ENCODE measurements at regions of chr16 and their contacts with region 1.

Region 1: GRCh38 chr16:72093448-72094265 is at the starts of genes DHX38 and TXNL4B:
- DNase-seq: peak; percentile 87 to 97
- ATAC-seq: peak; percentile 99 to 100 (median 99)
- H3K4me3 ChIP-seq: peak within 1 kb of the TSS; percentile 82 to 99 (median 90)
- H3K27ac ChIP-seq: peak within 1 kb of the TSS; percentile 74 to 95 (median 92)
- H3K4me1 ChIP-seq: peaks cover 0 to 46% (median 33%) of the 10 kb centered on the region in 9 donors
- H3K27me3 ChIP-seq: no peaks in the 10 kb centered on the region
- CTCF ChIP-seq: no peak
- total RNA-seq, gene DHX38: 29.1 to 46.5 (median 36.6) TPM
- total RNA-seq, gene TXNL4B: 3.2 to 11.7 (median 5.9) TPM

Region 2: DNA sequence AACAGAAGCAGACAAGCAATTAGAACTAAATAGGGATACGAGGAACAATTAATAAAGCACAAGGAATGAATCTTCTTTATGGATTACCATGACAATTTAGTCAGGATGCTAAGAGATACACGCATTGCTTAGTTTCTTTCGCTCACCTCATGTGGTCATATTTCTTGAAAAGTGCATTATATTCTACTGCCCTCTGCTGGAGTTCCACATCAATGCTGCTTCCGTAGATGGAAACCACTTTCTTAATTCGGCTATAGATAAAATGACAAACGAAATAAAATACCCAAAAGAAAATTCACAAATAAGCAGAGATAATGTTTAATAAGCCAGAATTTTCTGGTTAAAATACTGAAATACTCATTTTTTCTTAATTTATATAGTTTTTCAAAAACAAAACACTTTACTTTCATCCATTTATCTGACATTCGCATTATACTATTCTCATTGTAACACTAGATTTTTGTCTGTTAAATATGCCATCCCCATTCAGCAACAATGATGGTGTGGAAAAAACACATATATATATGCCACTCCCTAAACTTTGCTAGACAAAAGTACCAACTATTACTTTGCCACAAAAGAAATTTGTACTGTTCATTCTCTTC is 347.1 kb before region 1 on chr16:
- intact Hi-C with region 1: no loop called
- DNase-seq: no peak
- ATAC-seq: no peak
- H3K4me3 ChIP-seq: no peak overlapping the region
- H3K27ac ChIP-seq: no peak overlapping the region
- H3K4me1 ChIP-seq: peaks cover 0 to 7% (median 0%) of the 10 kb centered on the region in 9 donors
- H3K27me3 ChIP-seq: no peaks in the 10 kb centered on the region
- CTCF ChIP-seq: peak; percentile 38 to 78 (median 70)

Region 3: DNA sequence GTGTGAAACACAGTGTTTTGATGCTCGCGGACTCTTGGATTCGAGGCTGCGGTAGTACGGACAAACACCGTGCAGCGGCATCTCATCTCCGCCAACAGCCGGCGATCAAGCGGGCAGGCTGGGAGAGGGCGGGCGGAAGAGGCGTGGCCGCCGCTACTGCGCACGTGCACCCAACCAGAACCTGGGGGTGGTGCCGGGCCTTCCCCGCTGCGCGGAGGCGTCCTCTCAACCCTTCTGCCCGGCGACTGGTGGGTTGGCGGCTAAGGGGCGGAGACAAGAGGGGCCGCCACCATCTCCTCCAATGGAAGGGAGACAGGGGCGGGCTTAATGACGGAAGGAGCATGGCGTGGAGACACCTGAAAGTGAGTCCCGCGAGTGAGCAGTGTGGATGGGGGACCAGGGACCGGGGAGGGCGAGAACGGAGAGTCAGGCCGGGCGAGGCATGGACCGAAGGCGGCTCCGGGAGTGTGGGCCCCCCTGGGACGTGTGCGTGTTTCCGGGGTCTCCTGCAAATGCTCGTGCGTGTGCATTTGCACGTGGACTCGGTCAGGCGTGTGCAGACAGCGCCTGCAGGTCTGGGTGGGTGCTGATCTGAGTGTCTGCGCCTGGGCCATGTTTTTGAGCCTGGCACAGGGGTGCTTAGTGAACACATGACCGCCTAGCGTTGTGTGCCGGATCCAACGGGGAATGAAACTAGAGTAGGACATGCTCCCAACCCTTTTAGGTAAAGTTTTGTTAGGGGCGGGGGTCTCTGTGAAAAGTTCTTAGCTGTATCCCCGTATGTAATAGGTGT is 85.0 kb before region 1 on chr16 and contains the start of gene DHODH:
- intact Hi-C with region 1: loop called in 3 of 10 experiments (anchors 1 to 10 kb)
- DNase-seq: peak; percentile 98
- ATAC-seq: peak; percentile 99 to 100 (median 100)
- H3K4me3 ChIP-seq: peak within 1 kb of the TSS; percentile 60 to 98 (median 90)
- H3K27ac ChIP-seq: peak within 1 kb of the TSS in 9 of 10 donors; percentile 23 to 78 (median 60)
- H3K4me1 ChIP-seq: peaks cover 0 to 19% (median 16%) of the 10 kb centered on the region in 9 donors
- H3K27me3 ChIP-seq: no peaks in the 10 kb centered on the region
- CTCF ChIP-seq: peak in 4 of 9 donors; percentile 21 to 42 (median 40)
- total RNA-seq, gene DHODH: 6.1 to 12.6 (median 8.9) TPM

Region 4: GRCh38 chr16:72072514-72073342 is 20.9 kb before region 1 on chr16:
- intact Hi-C with region 1: loop called in 4 of 10 experiments (anchors 1 to 2 kb)
- DNase-seq: peak in 1 of 2 donors; percentile 38
- ATAC-seq: peak; percentile 57 to 81 (median 72)
- H3K4me3 ChIP-seq: peak overlapping the region in 4 of 10 donors; percentile 2 to 18 (median 6)
- H3K27ac ChIP-seq: peak overlapping the region; percentile 58 to 96 (median 82)
- H3K4me1 ChIP-seq: peaks cover 0 to 41% (median 9%) of the 10 kb centered on the region in 9 donors
- H3K27me3 ChIP-seq: no peaks in the 10 kb centered on the region
- CTCF ChIP-seq: no peak

Measured in heart right ventricle (tissue), 16 donors.